Right cardiac atrium (tissue), 5 donors: ENCODE measurements at regions of chr10 and their contacts with region 1.

Region 1: GRCh38 chr10:71383972-71384687 is 12.6 kb upstream of the CDH23 start:
- DNase-seq: peak; percentile 66 to 90 (median 87)
- ATAC-seq: peak; percentile 89 to 90
- H3K4me3 ChIP-seq: no peak overlapping the region
- H3K27ac ChIP-seq: no peak overlapping the region
- H3K4me1 ChIP-seq: no peaks in the 10 kb centered on the region
- H3K27me3 ChIP-seq: no peaks in the 10 kb centered on the region

Region 2: DNA sequence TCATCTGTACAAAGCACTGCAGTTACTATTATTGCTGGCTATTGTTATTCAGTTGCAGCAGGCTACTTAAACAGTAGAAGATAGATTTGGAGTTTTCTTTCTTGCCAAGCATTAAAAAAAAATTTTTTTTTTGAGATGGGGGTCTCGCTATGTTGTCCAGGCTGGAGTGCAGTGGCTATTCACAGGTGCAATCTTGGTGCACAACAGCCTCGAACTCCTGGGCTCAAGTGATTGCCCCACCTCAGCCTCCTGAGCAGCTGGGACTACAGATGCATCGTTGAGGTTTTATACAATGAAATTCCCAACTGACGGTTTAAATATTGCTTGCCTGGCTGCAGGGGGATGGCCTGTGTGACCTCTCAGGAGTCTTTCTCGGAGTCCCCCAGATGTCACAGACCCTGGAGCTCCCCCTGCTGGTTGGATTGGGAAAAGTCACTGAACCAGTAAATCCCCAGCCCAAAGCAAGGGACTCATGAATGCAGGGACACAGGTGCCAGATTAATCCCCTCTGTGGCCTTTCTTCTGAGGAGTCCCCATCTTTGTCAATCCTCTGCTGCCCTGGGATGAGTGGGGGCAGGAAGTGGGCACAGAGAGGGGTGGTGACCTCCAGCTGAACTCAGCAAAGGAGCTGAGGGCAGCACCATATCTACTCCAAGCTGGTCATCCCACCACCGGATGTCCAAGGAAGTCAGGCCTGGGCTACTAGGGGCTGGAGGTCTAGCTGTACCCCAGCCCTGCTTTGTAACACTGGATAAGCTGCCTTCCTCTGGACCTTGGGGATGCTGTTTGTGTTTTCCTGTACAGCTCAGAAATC is 185.9 kb after region 1 on chr10:
- intact Hi-C with region 1: loop called in 2 of 4 experiments (anchors 5 kb)
- DNase-seq: peak; percentile 65 to 87 (median 77)
- ATAC-seq: peak; percentile 37 to 64
- H3K4me3 ChIP-seq: no peak overlapping the region
- H3K27ac ChIP-seq: no peak overlapping the region
- H3K4me1 ChIP-seq: no peaks in the 10 kb centered on the region
- H3K27me3 ChIP-seq: no peaks in the 10 kb centered on the region

Region 3: DNA sequence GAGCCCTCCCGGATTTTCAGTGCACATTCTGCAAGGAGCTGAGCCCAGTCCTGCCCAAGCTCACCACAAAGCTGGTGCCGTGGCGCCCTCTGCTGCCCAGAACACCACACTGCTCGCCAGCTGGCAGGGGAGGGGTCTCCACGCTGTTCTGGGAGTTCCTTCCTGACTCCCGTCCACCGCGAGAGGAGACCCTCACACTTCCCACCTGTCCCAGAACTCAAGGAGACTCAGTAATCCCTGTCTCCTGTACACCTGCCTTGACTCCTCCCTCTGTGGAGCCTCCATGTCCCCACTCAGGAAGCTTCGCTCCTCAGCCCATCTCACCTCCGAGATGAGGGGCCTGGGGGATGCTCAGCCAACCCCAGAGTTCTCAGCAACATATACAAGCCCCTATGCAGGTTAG is 324.2 kb after region 1 on chr10:
- intact Hi-C with region 1: loop called in 2 of 4 experiments (anchors 10 kb)
- DNase-seq: peak; percentile 65 to 88 (median 88)
- ATAC-seq: peak; percentile 7 to 37
- H3K4me3 ChIP-seq: no peak overlapping the region
- H3K27ac ChIP-seq: no peak overlapping the region
- H3K4me1 ChIP-seq: peaks cover 5% of the 10 kb centered on the region
- H3K27me3 ChIP-seq: no peaks in the 10 kb centered on the region

Region 4: GRCh38 chr10:71812016-71812912 is 428.1 kb after region 1 on chr10:
- intact Hi-C with region 1: loop called in 2 of 4 experiments (anchors 5 to 10 kb)
- DNase-seq: peak; percentile 71 to 90 (median 89)
- ATAC-seq: peak; percentile 72 to 81
- H3K4me3 ChIP-seq: no peak overlapping the region
- H3K27ac ChIP-seq: no peak overlapping the region
- H3K4me1 ChIP-seq: peaks cover 2% of the 10 kb centered on the region
- H3K27me3 ChIP-seq: no peaks in the 10 kb centered on the region